ENCODE measurements at regions of chr9 and their contacts with region 1.

Region 1: GRCh38 chr9:121485623-121486022 is 14.0 kb downstream of the GGTA1 start:
- DNase-seq: no peak
- H3K4me3 ChIP-seq: no peak overlapping the region
- H3K27ac ChIP-seq: no peak overlapping the region
- H3K4me1 ChIP-seq: no peaks in the 10 kb centered on the region
- CTCF ChIP-seq: no peak

Region 2: DNA sequence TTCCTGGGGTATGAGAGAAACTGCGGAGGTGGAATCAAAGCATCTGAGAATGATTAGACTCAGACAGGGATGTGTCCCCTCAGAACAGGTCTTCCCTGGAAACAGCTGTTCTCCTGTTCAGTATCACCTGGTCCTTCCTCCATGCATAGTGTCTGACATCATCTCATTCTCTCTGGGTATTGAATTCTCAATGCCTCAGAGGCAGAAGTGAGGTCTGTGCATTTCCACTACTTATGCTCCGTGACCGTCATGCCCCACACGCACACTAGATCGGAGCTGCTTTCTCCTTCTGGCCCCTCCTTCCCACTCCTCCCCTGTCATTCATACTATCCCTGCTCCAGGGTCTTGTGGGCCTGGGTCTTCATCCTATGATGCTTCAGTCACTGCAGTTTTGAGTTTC is 104.4 kb after region 1 on chr9:
- CTCF ChIA-PET with region 1: interaction called, 10 read pairs
- POLR2A ChIA-PET with region 1: no interaction called
- intact Hi-C with region 1: no loop called
- DNase-seq: no peak
- H3K4me3 ChIP-seq: no peak overlapping the region
- H3K27ac ChIP-seq: no peak overlapping the region
- H3K4me1 ChIP-seq: no peaks in the 10 kb centered on the region
- CTCF ChIP-seq: no peak